Calu3 (cell line): ENCODE measurements at regions of chr7 and their contacts with region 1.

Region 1: GRCh38 chr7:90119178-90119971 is 34.9 kb upstream of the STEAP1 start:
- DNase-seq: peak; percentile 18
- H3K4me3 Mint-ChIP-seq: peak overlapping the region; percentile 89
- H3K27ac Mint-ChIP-seq: no peak overlapping the region
- H3K4me1 Mint-ChIP-seq: peaks cover 10% of the 10 kb centered on the region
- H3K27me3 Mint-ChIP-seq: peaks cover 26% of the 10 kb centered on the region
- CTCF ChIP-seq: no peak

Region 2: DNA sequence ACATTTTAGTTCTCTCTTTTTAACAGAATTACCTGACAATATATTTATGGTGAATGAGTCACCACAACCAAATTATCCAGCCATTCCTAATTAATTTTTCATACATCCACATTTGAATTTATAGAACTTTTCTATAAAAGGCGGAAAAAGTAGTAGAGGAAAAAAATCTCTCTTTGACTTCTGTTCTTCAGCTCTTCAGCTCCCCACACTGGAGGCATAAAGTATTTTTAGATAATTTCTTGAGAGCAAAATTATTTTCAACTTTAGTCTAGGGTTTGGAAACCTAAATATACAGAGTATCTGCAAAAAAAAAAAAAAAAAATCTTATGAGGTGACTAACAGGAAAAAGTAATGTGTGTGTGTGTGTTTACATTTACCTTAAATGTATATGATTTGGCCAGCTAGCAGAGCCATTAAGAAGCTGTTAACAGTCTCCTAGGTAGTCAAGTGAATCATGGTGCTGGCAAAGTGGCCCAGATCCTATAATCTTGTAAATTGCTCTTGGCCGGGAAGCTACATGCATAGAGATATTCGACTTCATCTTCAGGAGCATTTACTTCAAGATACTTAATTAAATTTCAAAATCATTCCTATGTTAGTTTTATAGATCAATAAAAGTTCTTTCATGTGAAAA is 348.3 kb before region 1 on chr7:
- CTCF ChIA-PET with region 1: no interaction called
- intact Hi-C with region 1: loop called (anchors 10 kb)
- DNase-seq: no peak
- H3K4me3 Mint-ChIP-seq: no peak overlapping the region
- H3K27ac Mint-ChIP-seq: peak overlapping the region; percentile 46
- H3K4me1 Mint-ChIP-seq: peaks cover 16% of the 10 kb centered on the region
- H3K27me3 Mint-ChIP-seq: no peaks in the 10 kb centered on the region
- CTCF ChIP-seq: peak; percentile 24

Region 3: GRCh38 chr7:90642962-90643361 is 523.6 kb after region 1 on chr7:
- CTCF ChIA-PET with region 1: no interaction called
- intact Hi-C with region 1: no loop called
- DNase-seq: no peak
- H3K4me3 Mint-ChIP-seq: no peak overlapping the region
- H3K27ac Mint-ChIP-seq: no peak overlapping the region
- H3K4me1 Mint-ChIP-seq: no peaks in the 10 kb centered on the region
- H3K27me3 Mint-ChIP-seq: no peaks in the 10 kb centered on the region
- CTCF ChIP-seq: no peak